ENCODE measurements at regions of chr7 and their contacts with region 1.

Region 1: DNA sequence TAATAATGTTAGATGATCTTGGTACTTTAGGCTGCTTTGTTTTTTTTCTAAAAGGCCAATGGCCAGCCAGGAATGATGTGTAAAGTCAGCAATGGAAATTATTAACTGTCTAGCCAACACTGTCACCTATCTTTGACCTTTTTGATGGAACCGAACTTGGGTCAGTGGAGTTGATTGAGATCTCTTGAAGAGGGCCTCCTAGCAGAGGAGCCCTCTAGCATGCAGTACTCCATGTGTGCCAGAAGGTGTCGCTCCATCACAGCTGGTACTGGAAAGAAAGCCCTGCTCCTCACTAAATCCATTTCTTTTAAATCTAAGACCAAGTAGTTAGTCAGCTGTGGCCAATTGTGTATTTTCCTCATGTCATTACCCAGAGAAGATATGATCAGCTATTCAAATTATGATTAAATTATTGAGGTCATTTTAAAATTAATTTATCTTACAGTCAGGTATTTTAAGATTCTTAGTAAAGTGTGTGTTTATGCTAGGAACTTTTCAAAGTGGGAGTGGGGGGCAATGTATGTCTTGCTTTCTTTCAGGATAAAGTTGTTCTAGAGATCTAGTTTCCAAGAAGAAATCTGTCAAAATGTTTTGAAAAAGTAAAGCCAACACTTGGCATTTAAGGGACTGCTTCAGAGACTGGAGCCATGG is 33.1 kb upstream of the CROT start:
- DNase-seq: no peak
- H3K4me3 ChIP-seq: no peak overlapping the region
- H3K27ac ChIP-seq: no peak overlapping the region
- H3K4me1 ChIP-seq: peaks cover 14% of the 10 kb centered on the region
- H3K27me3 ChIP-seq: no peaks in the 10 kb centered on the region
- CTCF ChIP-seq: peak; percentile 92 to 97 (median 96)
- POLR2A ChIP-seq: no peak

Region 2: DNA sequence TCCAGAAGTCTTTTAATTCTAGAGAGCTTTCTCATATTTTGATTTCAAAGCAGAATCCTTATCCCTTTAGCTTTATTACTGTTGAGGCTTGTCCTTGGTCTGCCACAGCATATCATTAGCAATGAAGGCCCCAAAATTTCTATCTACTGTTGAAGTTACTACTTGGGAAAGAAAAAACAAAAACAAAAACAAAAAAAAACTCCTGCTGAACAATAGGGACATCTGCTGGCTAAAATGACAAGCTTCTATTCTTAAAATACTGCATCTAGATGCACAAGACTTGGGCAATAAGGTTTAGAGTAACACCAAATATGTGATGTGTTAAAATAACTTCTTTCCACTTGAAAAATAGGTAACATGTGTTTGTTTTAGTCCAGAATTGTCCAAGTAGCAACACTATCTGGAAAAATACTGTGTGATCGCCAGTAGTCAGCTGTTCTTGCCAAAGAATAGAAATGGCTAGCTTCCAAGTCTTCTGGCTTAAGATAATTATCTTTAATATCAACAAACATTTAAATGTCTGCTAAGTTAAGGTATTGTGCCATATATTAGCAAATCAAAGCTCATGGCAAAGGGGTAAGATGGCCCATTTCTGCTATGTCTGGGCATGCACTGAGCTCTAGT is 163.9 kb before region 1 on chr7:
- intact Hi-C with region 1: no loop called
- DNase-seq: no peak
- H3K4me3 ChIP-seq: no peak overlapping the region
- H3K27ac ChIP-seq: no peak overlapping the region
- H3K4me1 ChIP-seq: peaks cover under 1% of the 10 kb centered on the region
- H3K27me3 ChIP-seq: no peaks in the 10 kb centered on the region
- CTCF ChIP-seq: peak in 2 of 3 experiments; percentile 25
- POLR2A ChIP-seq: no peak

Region 3: DNA sequence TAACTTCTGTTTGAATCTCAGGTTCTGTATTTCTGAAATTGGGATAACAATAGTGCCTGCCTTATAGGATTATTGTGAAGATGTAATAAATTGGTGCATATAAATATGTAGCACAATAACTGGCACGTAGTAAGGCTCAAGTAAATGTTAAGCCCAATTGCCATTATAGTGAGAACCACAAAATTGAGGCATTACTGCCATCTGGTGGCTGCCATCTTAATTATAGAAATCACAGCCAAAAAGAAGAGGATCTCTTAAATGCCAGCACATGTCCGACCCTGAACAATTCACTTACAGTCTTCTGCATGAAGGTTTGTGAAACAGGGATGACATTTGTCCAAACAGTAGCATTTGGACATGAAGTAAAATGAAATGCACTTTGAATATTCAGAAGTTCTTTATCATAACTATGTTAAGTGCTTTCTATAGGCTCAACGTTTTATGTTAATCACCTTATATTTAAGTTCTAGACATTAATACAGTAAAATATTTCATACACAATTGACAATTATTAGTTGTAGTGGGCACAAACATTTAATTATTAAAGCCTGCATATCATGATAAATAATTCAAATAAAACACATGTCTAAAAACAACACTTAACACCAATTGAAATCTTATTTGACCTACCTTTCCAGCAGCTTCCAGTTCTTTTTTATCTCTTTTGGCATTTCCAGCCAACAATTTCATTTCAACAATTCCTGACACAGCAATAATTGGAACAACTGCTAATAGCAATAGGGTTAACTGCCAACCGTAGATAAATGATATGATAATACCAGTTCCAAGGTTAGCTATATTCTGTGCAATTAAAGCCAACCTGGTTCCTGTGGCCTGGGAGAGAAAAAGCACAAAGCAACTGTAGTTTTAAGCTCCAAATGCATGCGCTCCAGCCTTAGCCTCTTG is 104.6 kb after region 1 on chr7:
- intact Hi-C with region 1: loop called (anchors 5 kb)
- DNase-seq: no peak
- H3K4me3 ChIP-seq: no peak overlapping the region
- H3K27ac ChIP-seq: no peak overlapping the region
- H3K4me1 ChIP-seq: peaks cover 20% of the 10 kb centered on the region
- H3K27me3 ChIP-seq: no peaks in the 10 kb centered on the region
- CTCF ChIP-seq: peak in 2 of 3 experiments; percentile 75 to 80
- POLR2A ChIP-seq: no peak

Measured in vagina (tissue), 2 donors.